ENCODE measurements at regions of chr12 and their contacts with region 1.

Region 1: GRCh38 chr12:122880668-122881067 is 15.3 kb downstream of the VPS37B start:
- DNase-seq: peak; percentile 59

Region 2: GRCh38 chr12:122403115-122403770 is 477.4 kb before region 1 on chr12:
- in situ Hi-C with region 1: no loop called
- DNase-seq: no peak

Region 3: DNA sequence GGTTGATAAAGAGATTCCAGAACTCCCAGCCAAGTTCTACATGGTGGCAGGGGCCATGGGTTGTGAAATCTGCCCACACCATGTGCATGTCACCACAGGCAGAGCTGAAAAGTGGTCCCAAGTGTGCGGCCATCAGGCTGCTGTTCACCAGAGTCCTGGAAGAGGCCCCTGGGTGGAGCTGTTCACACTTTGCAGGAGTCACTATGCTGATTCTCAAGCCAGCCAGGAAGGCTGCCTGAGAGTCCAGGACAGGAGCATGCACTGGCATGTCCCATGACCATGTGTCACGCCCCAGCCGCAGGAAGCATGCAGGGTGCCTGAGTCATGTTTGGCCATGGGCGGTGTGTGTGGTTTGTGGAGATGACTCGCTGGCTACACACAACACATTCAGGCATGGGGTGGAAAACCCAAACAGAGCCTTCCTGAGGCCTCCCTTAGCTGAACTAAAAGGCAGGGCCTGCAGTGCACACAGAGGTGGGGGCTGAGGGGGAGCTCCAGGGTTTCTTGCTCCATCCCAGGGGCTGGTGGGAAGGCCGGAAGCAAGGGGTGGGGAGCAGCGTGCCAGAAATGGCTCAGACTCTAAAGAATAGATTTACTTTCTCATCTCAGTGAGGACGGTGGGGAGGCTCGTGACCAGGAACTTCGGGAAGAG is 66.1 kb after region 1 on chr12:
- in situ Hi-C with region 1: loop called (anchors 5 kb)
- DNase-seq: peak; percentile 43

Measured in G401 (cell line).